ENCODE measurements at regions of chr17 and their contacts with region 1.

Region 1: DNA sequence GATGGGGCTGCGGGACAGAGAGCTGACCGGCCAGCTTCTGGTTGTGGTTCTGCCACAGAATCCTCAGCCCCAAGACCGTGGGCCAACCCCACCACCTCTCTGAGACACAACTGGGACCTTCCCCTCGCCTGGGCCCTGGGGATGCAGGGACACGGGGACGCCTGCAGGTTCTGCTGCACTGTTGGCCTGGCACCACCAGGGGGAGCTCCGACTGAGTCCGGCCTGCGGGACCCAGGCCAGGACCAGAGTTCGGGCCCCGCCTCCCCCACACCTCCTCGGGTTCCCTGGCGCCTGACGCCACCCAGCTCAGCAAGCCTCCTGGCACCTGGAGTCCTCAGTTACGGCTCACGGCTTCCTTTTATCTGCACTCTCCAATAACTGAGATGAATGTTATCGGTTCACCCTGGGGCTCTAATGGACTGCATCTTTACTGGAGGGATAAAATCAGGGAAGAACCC is 27.3 kb downstream of the TBC1D16 start:
- DNase-seq: peak; percentile 83
- ATAC-seq: peak; percentile 86
- H3K4me3 Mint-ChIP-seq: no peak overlapping the region
- H3K27ac Mint-ChIP-seq: no peak overlapping the region
- H3K4me1 Mint-ChIP-seq: peaks cover 1% of the 10 kb centered on the region
- H3K27me3 Mint-ChIP-seq: no peaks in the 10 kb centered on the region

Region 2: DNA sequence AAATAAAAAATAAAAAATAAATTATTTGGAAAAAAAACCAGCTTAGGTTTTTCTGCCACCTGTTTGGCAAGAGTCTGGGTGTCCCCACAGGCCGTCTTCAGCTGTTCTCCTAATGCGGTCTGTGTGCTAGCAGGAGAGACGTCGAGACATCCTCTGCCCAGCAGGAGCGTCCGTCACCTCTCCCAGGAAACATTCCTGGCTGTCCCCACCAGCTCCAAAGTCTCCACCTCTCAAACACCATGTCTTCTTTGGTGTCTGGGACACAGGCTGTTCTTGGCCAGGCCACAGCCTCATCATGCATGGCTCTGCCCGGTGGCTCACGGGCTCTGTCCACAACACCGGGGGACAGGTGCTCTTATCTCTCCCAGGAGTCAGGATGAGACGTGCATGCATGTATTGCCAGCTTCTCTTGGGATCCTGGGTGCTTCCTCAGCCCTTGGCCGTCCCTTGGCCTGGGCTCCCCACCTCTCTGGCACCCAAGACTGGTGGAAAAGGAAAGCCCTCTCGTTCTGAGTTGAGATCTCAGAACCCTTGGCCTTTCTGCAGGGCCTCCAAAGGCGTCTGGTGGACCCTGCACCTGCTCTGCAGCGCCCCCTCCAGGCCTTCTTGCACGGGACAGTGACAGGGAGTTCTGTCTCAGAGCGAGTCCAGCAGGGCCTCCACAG is 84.3 kb before region 1 on chr17:
- CTCF ChIA-PET with region 1: no interaction called
- DNase-seq: peak; percentile 68
- ATAC-seq: no peak
- H3K4me3 Mint-ChIP-seq: no peak overlapping the region
- H3K27ac Mint-ChIP-seq: no peak overlapping the region
- H3K4me1 Mint-ChIP-seq: peaks cover 20% of the 10 kb centered on the region
- H3K27me3 Mint-ChIP-seq: peaks cover 8% of the 10 kb centered on the region

Region 3: GRCh38 chr17:79970576-79971068 is 37.8 kb before region 1 on chr17:
- CTCF ChIA-PET with region 1: no interaction called
- DNase-seq: no peak
- ATAC-seq: no peak
- H3K4me3 Mint-ChIP-seq: no peak overlapping the region
- H3K27ac Mint-ChIP-seq: no peak overlapping the region
- H3K4me1 Mint-ChIP-seq: no peaks in the 10 kb centered on the region
- H3K27me3 Mint-ChIP-seq: peaks cover 11% of the 10 kb centered on the region

Region 4: DNA sequence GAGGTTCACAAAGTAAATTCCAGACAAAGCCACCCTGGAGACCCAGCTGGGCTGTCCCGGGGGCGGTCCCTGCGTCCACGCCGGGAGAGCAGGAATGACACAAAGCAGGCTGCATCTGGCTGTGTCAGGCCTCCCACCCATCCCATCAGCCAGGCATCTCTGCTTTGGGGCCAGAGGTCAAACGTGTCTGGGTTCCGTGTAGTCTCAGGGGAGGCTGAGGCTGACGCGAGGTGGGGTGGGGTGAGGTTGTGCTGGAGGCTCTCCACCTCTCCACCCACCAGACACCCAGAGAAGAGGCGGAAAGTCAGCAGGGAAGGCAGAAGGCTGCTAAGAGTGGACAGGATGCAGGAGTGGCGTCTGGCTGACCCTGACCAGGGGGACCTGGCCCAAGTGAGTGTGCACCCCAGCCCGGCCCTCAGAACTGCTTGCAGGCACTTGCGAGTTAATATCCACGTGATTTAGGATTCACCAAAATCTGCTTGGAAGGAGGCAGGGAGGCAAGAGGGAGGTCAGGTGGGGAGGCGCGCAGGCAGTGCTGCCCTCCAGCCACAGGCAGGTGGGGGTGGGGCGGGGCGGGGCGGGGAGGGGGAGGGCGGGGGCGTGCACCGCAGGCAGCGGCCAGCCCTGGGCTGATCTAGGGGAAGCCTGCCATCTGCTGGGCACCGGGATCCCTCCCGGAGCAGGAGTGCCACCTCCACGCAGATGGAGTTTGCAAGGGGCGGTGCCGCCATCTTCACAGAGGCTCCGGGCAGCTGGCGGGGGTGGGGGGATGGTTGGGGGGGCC is 17.1 kb before region 1 on chr17:
- CTCF ChIA-PET with region 1: interaction called, 46 read pairs
- DNase-seq: peak; percentile 90
- ATAC-seq: peak; percentile 95
- H3K4me3 Mint-ChIP-seq: peak overlapping the region; percentile 51
- H3K27ac Mint-ChIP-seq: no peak overlapping the region
- H3K4me1 Mint-ChIP-seq: peaks cover 30% of the 10 kb centered on the region
- H3K27me3 Mint-ChIP-seq: peaks cover 18% of the 10 kb centered on the region

Region 5: DNA sequence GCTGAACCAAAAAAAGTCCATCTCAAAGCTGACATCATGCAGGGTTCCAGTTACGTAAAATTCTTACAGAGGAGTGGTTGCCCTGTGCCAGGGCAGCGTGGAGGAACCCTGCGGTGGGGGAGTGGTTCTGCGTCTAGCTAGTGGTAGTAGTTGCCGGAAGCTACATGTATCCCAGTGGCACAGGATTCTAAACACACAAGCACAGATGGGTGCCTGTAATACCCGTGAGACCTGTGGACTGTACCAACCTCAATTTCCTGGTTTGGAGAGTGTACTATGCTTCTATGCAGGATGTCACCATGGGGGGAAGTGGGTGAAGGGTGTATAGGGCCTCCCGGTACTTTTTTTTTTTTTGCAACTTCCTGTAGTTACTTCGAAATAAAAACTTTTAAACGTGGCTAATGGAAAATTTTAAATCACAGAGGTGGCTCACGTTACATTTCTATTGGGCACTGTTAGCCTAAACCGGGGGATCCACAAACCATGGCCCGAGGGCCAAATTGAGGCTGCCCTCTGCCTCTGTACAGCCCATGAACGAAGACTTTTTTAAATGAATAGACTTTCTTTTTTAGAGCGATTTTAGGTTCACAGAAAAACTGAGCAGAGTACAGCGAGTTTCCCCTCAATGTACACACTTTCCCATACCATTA is 11.3 kb before region 1 on chr17:
- CTCF ChIA-PET with region 1: interaction called, 46 read pairs
- DNase-seq: peak; percentile 90
- ATAC-seq: peak; percentile 99
- H3K4me3 Mint-ChIP-seq: peak overlapping the region; percentile 58
- H3K27ac Mint-ChIP-seq: peak overlapping the region; percentile 95
- H3K4me1 Mint-ChIP-seq: peaks cover 50% of the 10 kb centered on the region
- H3K27me3 Mint-ChIP-seq: peaks cover 4% of the 10 kb centered on the region

Region 6: DNA sequence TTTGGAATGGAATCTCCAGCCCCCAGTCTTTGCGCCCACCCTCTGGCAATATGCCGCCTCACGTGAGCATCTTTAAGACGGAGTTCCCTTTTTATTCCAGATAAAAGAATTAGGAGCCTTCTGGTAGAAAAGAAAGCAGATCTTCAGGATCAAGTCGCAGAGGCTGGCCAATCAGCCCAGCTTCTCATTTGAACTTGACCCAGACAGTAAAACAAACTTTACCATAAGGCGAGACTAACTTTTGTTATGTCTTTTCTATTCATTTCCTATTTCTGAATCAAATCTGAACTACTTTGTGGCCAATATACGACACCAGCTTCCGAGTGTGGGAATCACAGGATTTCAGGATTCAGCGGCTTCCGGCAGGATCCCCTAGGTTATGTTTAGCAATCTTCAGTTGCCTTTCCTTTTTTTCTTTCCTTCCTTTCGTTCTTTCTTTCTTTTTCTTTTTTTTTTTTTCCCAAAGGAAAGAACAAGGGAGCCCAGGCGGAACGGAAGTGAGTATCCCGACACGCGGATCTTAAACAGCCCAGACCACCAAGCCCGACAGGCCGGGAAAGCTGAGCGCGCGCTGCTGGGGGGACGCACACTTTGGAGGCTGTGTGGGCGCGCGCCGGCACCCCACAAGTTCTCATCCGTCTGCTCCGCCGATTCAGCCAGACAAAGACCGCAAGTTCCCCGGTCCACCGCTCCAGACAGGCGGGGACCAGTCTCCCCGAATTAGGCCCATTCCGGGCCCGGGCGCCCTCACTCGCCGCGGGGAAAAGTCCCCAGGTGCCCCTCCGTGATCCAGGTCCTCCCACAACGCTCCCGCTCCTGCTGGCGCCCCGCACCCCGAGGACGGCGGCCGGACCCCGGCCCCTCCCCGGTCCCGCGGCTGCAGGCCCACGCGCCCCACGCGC is 26.6 kb after region 1 on chr17:
- CTCF ChIA-PET with region 1: interaction called, 16 read pairs
- DNase-seq: peak; percentile 75
- ATAC-seq: peak; percentile 37
- H3K4me3 Mint-ChIP-seq: peak overlapping the region; percentile 75
- H3K27ac Mint-ChIP-seq: peak overlapping the region; percentile 19
- H3K4me1 Mint-ChIP-seq: peaks cover 16% of the 10 kb centered on the region
- H3K27me3 Mint-ChIP-seq: peaks cover 35% of the 10 kb centered on the region

Region 7: GRCh38 chr17:80058311-80058955 is 50.0 kb after region 1 on chr17:
- CTCF ChIA-PET with region 1: interaction called, 14 read pairs
- DNase-seq: no peak
- ATAC-seq: no peak
- H3K4me3 Mint-ChIP-seq: no peak overlapping the region
- H3K27ac Mint-ChIP-seq: no peak overlapping the region
- H3K4me1 Mint-ChIP-seq: no peaks in the 10 kb centered on the region
- H3K27me3 Mint-ChIP-seq: no peaks in the 10 kb centered on the region

Region 8: DNA sequence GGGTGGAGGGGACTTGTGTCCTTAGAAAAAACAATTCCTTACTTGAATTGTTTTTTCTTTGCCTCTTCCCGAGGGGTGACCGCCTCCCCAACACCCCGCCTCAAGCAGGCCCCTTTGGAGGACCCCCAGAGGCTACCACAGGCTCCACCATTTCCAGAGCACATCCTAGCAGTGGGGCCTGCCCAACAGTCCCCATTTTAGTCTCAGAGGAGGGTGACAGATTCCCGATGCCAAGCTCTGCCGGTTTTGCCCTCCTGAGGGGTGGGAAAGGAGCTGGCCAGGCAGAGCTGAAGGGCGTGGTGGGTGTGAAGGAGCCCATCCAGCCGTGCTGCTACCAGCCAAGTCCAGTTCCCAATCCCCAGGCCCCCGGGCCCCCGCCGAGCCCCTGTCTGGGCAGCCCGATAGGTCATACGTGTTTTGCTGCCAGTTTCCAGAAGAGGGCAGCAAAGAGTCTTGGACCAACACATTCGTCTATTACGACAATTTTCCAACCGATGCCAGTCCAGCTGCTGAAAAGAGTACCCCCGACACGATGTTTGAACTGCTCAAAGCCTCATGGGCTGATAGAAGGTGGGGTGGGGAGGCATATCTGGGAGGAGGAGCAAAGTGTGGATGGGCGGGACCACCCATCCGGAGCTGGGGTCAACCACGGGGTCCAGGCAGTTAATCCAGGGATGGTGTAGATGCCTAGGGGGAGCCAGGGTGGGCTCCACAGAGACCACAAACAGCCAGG is 74.2 kb after region 1 on chr17:
- CTCF ChIA-PET with region 1: interaction called, 28 read pairs
- DNase-seq: peak; percentile 75
- ATAC-seq: peak; percentile 76
- H3K4me3 Mint-ChIP-seq: no peak overlapping the region
- H3K27ac Mint-ChIP-seq: no peak overlapping the region
- H3K4me1 Mint-ChIP-seq: peaks cover 1% of the 10 kb centered on the region
- H3K27me3 Mint-ChIP-seq: peaks cover 7% of the 10 kb centered on the region